PC-9 (cell line): ENCODE measurements at regions of chr11 and their contacts with region 1.

Region 1: GRCh38 chr11:68038718-68039525 is at the start of gene TCIRG1:
- DNase-seq: peak; percentile 73 to 80
- H3K4me3 ChIP-seq: peak within 1 kb of the TSS; percentile 65
- H3K27ac ChIP-seq: peak within 1 kb of the TSS; percentile 65
- H3K4me1 ChIP-seq: peaks cover 35% of the 10 kb centered on the region
- H3K27me3 ChIP-seq: no peaks in the 10 kb centered on the region
- CTCF ChIP-seq: no peak
- total RNA-seq, gene TCIRG1: 125 and 175 TPM in 2 replicates

Region 2: DNA sequence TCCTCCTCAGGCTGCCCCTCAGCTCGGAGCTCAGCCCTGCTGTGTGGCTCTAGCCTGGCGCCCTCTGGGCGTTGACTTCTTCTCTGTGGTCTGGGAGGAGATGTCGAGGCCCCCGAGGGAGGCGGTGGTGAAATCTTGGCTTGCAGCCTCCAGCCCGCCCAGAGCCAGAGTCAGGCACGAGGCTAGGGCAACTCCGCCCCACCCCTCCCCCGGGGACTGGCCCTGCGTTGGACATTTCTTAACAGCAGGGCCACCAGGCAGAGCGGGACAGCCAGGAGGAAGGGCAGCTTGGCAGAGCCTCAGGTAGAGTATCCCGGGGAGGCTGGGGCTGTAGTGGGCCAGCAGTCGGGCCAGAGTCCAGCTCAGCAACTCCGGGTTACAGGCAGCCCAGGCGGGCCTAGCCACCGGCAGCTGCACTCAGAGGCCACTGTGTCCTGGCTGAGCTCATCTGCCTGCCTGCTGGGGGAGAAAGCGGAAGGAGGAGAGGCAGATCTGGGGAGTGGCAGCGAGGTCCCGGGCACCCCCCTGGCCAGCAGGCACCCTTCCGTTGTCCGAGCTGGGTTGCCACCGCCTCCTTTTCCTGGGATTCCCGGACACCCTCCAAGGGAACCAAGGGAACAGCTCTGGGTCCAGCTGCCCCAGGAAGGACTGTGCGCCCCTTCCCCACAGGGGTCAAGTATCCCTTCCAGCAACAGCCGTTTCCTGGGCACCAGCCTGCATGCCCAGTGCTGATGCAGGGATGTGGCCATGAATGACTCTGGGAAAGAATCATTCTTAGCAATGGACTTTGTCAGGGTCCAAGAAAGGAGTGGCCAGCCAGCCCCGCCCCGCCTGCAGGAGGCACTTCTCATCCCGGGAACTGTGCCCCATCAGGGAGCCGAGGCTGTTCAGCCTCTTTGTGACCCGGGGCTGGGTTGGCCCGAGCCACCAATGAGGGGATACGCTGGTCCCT is 28.6 kb before region 1 on chr11 and contains the start of gene ALDH3B1:
- CTCF ChIA-PET with region 1: interaction called, 22 read pairs
- POLR2A ChIA-PET with region 1: interaction called, 8 read pairs
- intact Hi-C with region 1: loop called (anchors 1 kb)
- DNase-seq: peak; percentile 90 to 98
- H3K4me3 ChIP-seq: peak within 1 kb of the TSS; percentile 59
- H3K27ac ChIP-seq: peak within 1 kb of the TSS; percentile 93
- H3K4me1 ChIP-seq: peaks cover 69% of the 10 kb centered on the region
- H3K27me3 ChIP-seq: no peaks in the 10 kb centered on the region
- CTCF ChIP-seq: no peak
- total RNA-seq, gene ALDH3B1: 98.1 and 104 TPM in 2 replicates

Region 3: GRCh38 chr11:68121067-68121899 is 82.4 kb after region 1 on chr11 and contains the start of gene CHKA:
- CTCF ChIA-PET with region 1: no interaction called
- POLR2A ChIA-PET with region 1: no interaction called
- intact Hi-C with region 1: loop called (anchors 5 kb)
- DNase-seq: peak; percentile 88 to 97
- H3K4me3 ChIP-seq: peak within 1 kb of the TSS; percentile 92
- H3K27ac ChIP-seq: peak within 1 kb of the TSS; percentile 97
- H3K4me1 ChIP-seq: peaks cover 77% of the 10 kb centered on the region
- H3K27me3 ChIP-seq: no peaks in the 10 kb centered on the region
- CTCF ChIP-seq: no peak
- total RNA-seq, gene CHKA: 84.2 and 90.5 TPM in 2 replicates

Region 4: GRCh38 chr11:68146704-68147474 is 108.0 kb after region 1 on chr11:
- CTCF ChIA-PET with region 1: interaction called, 3 read pairs
- POLR2A ChIA-PET with region 1: interaction called, 10 read pairs
- intact Hi-C with region 1: loop called (anchors 5 kb)
- DNase-seq: peak; percentile 76 to 96
- H3K4me3 ChIP-seq: no peak overlapping the region
- H3K27ac ChIP-seq: peak overlapping the region; percentile 91
- H3K4me1 ChIP-seq: peaks cover 74% of the 10 kb centered on the region
- H3K27me3 ChIP-seq: no peaks in the 10 kb centered on the region
- CTCF ChIP-seq: no peak

Region 5: GRCh38 chr11:68297812-68298658 is 259.1 kb after region 1 on chr11:
- CTCF ChIA-PET with region 1: no interaction called
- POLR2A ChIA-PET with region 1: no interaction called
- intact Hi-C with region 1: no loop called
- DNase-seq: peak; percentile 58 to 83
- H3K4me3 ChIP-seq: no peak overlapping the region
- H3K27ac ChIP-seq: no peak overlapping the region
- H3K4me1 ChIP-seq: peaks cover 15% of the 10 kb centered on the region
- H3K27me3 ChIP-seq: no peaks in the 10 kb centered on the region
- CTCF ChIP-seq: peak; percentile 98

Region 6: GRCh38 chr11:68398995-68399851 is 360.3 kb after region 1 on chr11:
- CTCF ChIA-PET with region 1: no interaction called
- POLR2A ChIA-PET with region 1: no interaction called
- intact Hi-C with region 1: no loop called
- DNase-seq: no peak
- H3K4me3 ChIP-seq: no peak overlapping the region
- H3K27ac ChIP-seq: no peak overlapping the region
- H3K4me1 ChIP-seq: no peaks in the 10 kb centered on the region
- H3K27me3 ChIP-seq: no peaks in the 10 kb centered on the region
- CTCF ChIP-seq: no peak

Region 7: DNA sequence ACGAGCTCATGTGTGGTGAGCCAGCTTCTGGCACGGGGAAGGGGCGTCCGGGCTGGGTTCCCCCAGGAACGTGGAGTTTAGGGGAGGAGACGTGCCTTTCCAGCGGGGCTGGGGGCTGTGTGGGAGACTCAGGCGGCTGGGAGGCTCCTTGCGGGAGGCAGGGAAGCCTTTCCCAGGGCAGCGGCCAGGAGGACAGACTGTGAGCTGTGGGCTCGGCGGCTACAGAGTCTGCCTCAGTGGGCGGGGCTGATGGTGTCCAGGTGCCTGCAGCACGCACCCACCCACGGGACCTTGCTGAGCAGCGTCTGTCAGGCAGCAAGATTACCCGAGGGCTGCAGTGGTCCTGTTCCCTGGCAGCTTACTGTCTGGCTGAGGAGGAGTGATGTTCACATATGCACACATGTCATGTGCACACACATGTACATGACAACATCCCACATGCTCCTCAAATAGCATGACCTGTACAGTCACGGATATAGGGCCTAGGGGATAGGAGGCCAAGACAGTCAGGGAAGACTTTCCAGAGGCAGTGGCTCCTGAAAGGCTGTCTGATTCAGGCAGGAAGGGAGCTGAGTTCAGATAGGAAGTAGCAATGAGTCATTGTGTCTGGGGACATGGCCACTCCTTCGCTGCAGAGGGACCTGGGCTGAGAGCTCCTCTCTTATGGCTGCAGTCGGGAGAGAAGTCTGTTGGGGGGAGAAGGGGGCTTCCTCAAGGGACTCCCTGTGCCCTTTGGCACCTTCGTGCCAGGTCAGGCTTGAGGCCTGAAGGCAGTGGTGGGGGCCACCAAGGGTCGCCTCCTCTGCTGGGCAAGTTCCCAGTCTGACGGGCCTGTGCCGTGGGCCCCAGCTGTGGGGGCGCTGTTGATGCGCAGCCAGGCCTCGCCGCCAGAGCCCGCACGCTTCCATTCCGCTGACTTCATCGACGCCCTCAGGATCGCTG is 398.3 kb after region 1 on chr11:
- CTCF ChIA-PET with region 1: no interaction called
- POLR2A ChIA-PET with region 1: interaction called, 17 read pairs
- intact Hi-C with region 1: no loop called
- DNase-seq: peak in 1 of 2 experiments; percentile 35
- H3K4me3 ChIP-seq: no peak overlapping the region
- H3K27ac ChIP-seq: no peak overlapping the region
- H3K4me1 ChIP-seq: 0 out of 2 replicates have a peak, but pooled peaks cover 7% of the 10 kb centered on the region
- H3K27me3 ChIP-seq: no peaks in the 10 kb centered on the region
- CTCF ChIP-seq: no peak